Panc1 (cell line): ENCODE measurements at regions of chr1 and their contacts with region 1.

Region 1: GRCh38 chr1:44842862-44843655 is at the start of gene PTCH2:
- DNase-seq: no peak
- ATAC-seq: peak; percentile 88
- H3K4me3 ChIP-seq: peak within 1 kb of the TSS; percentile 50 to 55
- H3K27ac ChIP-seq: no peak within 1 kb of the TSS
- H3K4me1 ChIP-seq: no peaks in the 10 kb centered on the region
- H3K27me3 ChIP-seq: no peaks in the 10 kb centered on the region
- CTCF ChIP-seq: no peak
- total RNA-seq, gene PTCH2: 0.74 TPM

Region 2: GRCh38 chr1:44739361-44740178 is 103.5 kb before region 1 on chr1 and contains the start of gene KIF2C:
- CTCF ChIA-PET with region 1: no interaction called
- POLR2A ChIA-PET with region 1: no interaction called
- in situ Hi-C with region 1: no loop called
- intact Hi-C with region 1: no loop called
- DNase-seq: peak; percentile 94
- ATAC-seq: peak; percentile 99
- H3K4me3 ChIP-seq: peak within 1 kb of the TSS; percentile 80 to 93
- H3K27ac ChIP-seq: peak within 1 kb of the TSS; percentile 95
- H3K4me1 ChIP-seq: peaks cover 7% of the 10 kb centered on the region; the same call in 1 of the 2 replicates
- H3K27me3 ChIP-seq: no peaks in the 10 kb centered on the region
- CTCF ChIP-seq: no peak
- total RNA-seq, gene KIF2C: 69.4 TPM

Region 3: GRCh38 chr1:44970317-44970716 is 127.3 kb after region 1 on chr1:
- CTCF ChIA-PET with region 1: interaction called, 14 read pairs
- POLR2A ChIA-PET with region 1: no interaction called
- in situ Hi-C with region 1: no loop called
- intact Hi-C with region 1: no loop called
- DNase-seq: no peak
- ATAC-seq: peak; percentile 75; the same call in 1 of the 2 replicates
- H3K4me3 ChIP-seq: no peak overlapping the region
- H3K27ac ChIP-seq: no peak overlapping the region
- H3K4me1 ChIP-seq: peaks cover 7% of the 10 kb centered on the region
- H3K27me3 ChIP-seq: no peaks in the 10 kb centered on the region
- CTCF ChIP-seq: no peak